ENCODE measurements at regions of chr5 and their contacts with region 1.

Region 1: GRCh38 chr5:138927979-138928378 is 52.8 kb upstream of the LRRTM2 start:
- DNase-seq: peak; percentile 80
- H3K4me3 ChIP-seq: no peak overlapping the region
- H3K27ac ChIP-seq: peak overlapping the region in 1 of 8 donors; percentile 7
- H3K4me1 ChIP-seq: peaks cover 0 to 15% (median 5%) of the 10 kb centered on the region in 6 donors
- H3K27me3 ChIP-seq: no peaks in the 10 kb centered on the region
- CTCF ChIP-seq: no peak
- POLR2A ChIP-seq: no peak

Region 2: DNA sequence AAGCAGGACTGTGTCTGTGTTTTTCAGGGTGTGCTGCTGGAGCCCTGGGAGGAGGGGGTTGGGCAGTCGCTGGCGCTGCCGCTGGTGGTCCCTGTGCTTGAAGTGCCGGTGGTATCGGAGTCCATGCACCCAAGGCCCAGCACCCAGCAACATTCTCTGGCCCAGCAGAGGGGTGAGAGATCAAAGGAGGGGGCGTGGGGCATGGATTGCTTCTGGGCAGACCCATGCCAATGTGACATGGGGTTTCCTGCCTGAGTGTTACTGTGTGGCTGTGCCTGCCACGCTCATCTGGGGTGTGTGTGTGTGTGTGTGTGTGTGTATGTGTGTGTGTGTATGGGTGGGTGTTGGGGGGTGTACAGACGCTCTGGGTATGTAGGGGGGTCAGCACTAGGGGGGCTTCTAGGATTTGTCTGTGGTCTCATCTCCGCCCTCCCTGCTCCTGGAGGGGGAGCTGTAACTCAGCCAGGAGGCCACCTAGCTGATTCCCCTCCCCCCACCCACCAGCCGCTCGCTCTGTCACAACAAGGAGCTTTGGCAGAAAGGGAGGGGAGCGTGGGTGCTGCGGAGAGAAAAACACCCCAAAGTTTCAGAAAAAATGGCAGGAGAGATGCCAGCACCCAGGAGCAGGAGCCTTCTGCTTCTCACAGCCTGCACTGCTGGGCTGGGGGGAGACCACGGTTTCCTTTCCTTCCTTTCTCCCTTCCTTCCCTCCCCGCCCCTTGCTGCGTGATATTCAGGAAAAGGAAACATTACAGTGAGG is 316.9 kb before region 1 on chr5:
- intact Hi-C with region 1: no loop called
- DNase-seq: no peak
- H3K4me3 ChIP-seq: peak overlapping the region in 2 of 8 donors; percentile 19 to 49
- H3K27ac ChIP-seq: peak overlapping the region in 4 of 8 donors; percentile 6 to 43 (median 32)
- H3K4me1 ChIP-seq: peaks cover 8 to 34% (median 22%) of the 10 kb centered on the region in 6 donors
- H3K27me3 ChIP-seq: peaks cover 0 to 21% (median 0%) of the 10 kb centered on the region in 7 donors
- CTCF ChIP-seq: no peak
- POLR2A ChIP-seq: no peak

Region 3: DNA sequence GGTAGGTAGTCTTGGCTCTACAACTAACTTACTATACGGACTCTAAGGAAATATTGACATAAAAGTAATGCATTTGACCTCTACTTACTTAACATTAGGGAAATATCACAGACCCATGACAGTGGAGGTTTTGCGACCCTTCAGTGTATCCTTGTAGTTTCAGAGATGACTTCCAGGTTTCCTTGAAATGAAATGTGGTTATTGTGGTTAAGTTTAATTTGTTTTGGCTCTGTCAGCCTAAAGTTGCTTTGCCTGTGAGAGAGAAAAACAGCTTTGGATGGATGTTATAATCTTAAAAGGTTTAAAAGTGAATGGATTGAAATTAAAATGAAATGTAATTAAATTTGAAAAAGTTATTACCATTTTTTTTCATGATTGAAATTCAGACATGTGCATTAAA is 95.8 kb before region 1 on chr5:
- intact Hi-C with region 1: loop called (anchors 10 kb)
- DNase-seq: no peak
- H3K4me3 ChIP-seq: no peak overlapping the region
- H3K27ac ChIP-seq: no peak overlapping the region
- H3K4me1 ChIP-seq: peaks cover 0 to 26% (median 7%) of the 10 kb centered on the region in 6 donors
- H3K27me3 ChIP-seq: no peaks in the 10 kb centered on the region
- CTCF ChIP-seq: no peak
- POLR2A ChIP-seq: no peak